ENCODE measurements at regions of chr1 and their contacts with region 1.

Region 1: DNA sequence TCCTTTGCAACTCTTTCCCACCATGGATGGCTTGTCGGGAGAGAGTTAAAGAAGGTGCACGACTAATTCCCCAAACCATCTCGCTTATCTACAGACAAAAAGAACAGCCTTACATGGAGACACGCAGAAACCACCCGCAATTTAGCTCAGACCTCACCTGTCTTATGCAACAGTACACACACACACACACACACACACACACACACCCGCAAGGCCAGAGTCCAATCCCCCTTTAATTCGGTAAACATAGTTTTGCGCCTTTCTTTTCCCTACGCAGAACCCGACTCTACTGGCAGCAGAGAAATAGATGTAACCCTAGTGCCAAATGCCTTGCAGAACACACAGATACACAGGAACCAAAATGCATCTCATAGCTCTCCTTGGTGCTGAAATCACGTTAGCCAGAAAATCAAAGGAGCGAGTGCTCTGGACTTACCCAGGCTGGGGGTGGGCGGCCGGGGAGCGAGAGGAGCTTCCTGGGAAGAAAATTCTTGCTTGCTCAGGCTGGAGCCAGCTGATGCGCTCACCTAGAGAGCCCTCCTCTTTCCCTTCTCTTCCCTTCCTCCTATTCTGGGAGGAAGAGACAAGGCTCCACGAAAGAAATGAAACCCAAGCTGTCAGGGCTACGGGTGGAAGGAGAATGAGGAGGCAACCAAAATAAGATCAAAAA is 470 bp downstream of the TNR start:
- DNase-seq: no peak
- H3K4me3 ChIP-seq: no peak overlapping the region
- H3K27ac ChIP-seq: no peak overlapping the region
- H3K4me1 ChIP-seq: no peaks in the 10 kb centered on the region
- H3K27me3 ChIP-seq: no peaks in the 10 kb centered on the region
- CTCF ChIP-seq: no peak

Region 2: GRCh38 chr1:175481126-175482066 is 261.5 kb before region 1 on chr1:
- intact Hi-C with region 1: loop called (anchors 10 kb)
- DNase-seq: no peak
- H3K4me3 ChIP-seq: no peak overlapping the region
- H3K27ac ChIP-seq: no peak overlapping the region
- H3K4me1 ChIP-seq: no peaks in the 10 kb centered on the region
- H3K27me3 ChIP-seq: no peaks in the 10 kb centered on the region
- CTCF ChIP-seq: peak; percentile 44

Region 3: GRCh38 chr1:175808573-175808972 is 65.6 kb after region 1 on chr1:
- intact Hi-C with region 1: no loop called
- DNase-seq: no peak
- H3K4me3 ChIP-seq: no peak overlapping the region
- H3K27ac ChIP-seq: no peak overlapping the region
- H3K4me1 ChIP-seq: no peaks in the 10 kb centered on the region
- H3K27me3 ChIP-seq: no peaks in the 10 kb centered on the region
- CTCF ChIP-seq: no peak

Region 4: GRCh38 chr1:175887981-175888433 is 145.1 kb after region 1 on chr1:
- intact Hi-C with region 1: loop called (anchors 10 kb)
- DNase-seq: peak; percentile 67
- H3K4me3 ChIP-seq: no peak overlapping the region
- H3K27ac ChIP-seq: no peak overlapping the region
- H3K4me1 ChIP-seq: no peaks in the 10 kb centered on the region
- H3K27me3 ChIP-seq: no peaks in the 10 kb centered on the region
- CTCF ChIP-seq: peak; percentile 88

Region 5: DNA sequence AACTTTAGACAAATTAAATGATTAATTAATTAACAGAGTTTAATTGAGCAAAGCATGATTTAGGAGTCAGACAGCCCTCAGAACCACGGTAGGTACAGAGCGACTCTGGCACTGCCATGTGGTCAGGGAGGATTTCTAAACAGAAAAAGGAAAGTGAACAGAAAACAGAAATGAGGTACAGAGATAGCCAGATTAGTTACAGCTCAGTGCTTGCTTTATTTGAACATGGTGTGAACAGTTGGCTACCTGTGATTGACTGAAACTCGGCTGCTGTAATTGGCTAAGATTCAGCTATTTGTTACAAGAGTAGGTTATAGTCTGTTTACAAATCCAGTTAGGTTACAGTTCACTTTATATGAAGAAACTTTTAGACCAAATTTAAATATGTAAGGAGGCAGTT is 163.4 kb after region 1 on chr1:
- intact Hi-C with region 1: no loop called
- DNase-seq: no peak
- H3K4me3 ChIP-seq: no peak overlapping the region
- H3K27ac ChIP-seq: no peak overlapping the region
- H3K4me1 ChIP-seq: no peaks in the 10 kb centered on the region
- H3K27me3 ChIP-seq: no peaks in the 10 kb centered on the region
- CTCF ChIP-seq: no peak

Measured in colonic mucosa (tissue), 4 donors.